ENCODE measurements at regions of chr18 and their contacts with region 1.

Region 1: GRCh38 chr18:33699372-33699771 is 121.4 kb downstream of the ASXL3 start:
- DNase-seq: no peak
- ATAC-seq: no peak
- H3K4me3 ChIP-seq: no peak overlapping the region
- H3K27ac ChIP-seq: no peak overlapping the region
- H3K4me1 ChIP-seq: no peaks in the 10 kb centered on the region
- H3K27me3 ChIP-seq: no peaks in the 10 kb centered on the region
- CTCF ChIP-seq: no peak
- POLR2A ChIP-seq: no peak
- RAD21 ChIP-seq: no peak

Region 2: GRCh38 chr18:32695534-32695933 is 1003.8 kb before region 1 on chr18:
- CTCF ChIA-PET with region 1: no interaction called
- POLR2A ChIA-PET with region 1: no interaction called
- RAD21 ChIA-PET with region 1: no interaction called
- intact Hi-C with region 1: no loop called
- DNase-seq: no peak
- ATAC-seq: no peak
- H3K4me3 ChIP-seq: no peak overlapping the region
- H3K27ac ChIP-seq: no peak overlapping the region
- H3K4me1 ChIP-seq: no peaks in the 10 kb centered on the region
- H3K27me3 ChIP-seq: peaks cover 7% of the 10 kb centered on the region; the same call in 1 of the 2 replicates
- CTCF ChIP-seq: no peak
- POLR2A ChIP-seq: no peak
- RAD21 ChIP-seq: no peak

Region 3: GRCh38 chr18:33483908-33484307 is 215.5 kb before region 1 on chr18:
- CTCF ChIA-PET with region 1: no interaction called
- POLR2A ChIA-PET with region 1: no interaction called
- RAD21 ChIA-PET with region 1: no interaction called
- intact Hi-C with region 1: loop called (anchors 5 kb)
- DNase-seq: no peak
- ATAC-seq: no peak
- H3K4me3 ChIP-seq: no peak overlapping the region
- H3K27ac ChIP-seq: no peak overlapping the region
- H3K4me1 ChIP-seq: no peaks in the 10 kb centered on the region
- H3K27me3 ChIP-seq: no peaks in the 10 kb centered on the region
- CTCF ChIP-seq: no peak
- POLR2A ChIP-seq: no peak
- RAD21 ChIP-seq: no peak

Region 4: DNA sequence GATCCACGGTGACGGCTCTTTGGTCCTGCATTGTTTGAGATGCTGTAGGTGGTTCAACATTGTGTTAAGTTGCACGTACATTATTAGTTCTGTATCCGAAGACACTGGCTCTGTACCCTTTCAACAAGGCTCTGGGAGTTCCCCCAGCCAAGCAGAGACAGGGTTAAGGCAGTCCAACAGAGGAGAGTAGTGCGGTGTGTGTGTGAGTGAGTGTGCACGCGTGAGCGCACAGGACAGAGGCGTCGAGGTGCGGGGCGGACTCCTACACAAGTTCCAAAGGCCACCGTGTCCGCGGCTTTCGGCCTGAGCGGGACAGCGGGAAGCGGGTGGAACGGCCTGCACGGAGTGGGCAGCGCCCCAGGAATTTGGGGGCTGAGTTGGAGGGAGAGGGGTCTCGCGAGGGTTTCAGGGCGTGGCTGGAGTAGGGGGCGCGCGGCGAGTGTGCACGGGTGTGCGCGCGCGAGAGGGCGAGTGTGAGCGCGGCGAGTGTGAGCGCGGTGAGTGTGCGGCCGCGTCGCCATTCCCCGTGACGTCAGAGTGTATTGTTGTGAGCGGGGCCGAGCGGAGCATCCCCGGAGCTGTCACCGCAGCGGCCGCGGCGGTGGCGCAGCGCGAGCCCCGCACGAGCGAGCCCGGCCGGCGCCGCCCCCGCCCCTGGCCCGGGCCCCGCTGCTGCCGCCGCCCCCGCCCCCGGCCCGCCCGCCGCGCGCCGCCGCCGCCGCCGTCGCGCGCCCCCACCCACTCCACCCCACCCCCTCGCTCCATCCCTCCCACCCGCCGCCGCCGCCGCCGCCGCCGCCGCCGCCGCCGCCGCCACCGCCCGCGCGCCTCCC is 121.5 kb before region 1 on chr18 and contains the start of gene ASXL3:
- CTCF ChIA-PET with region 1: no interaction called
- POLR2A ChIA-PET with region 1: no interaction called
- RAD21 ChIA-PET with region 1: no interaction called
- intact Hi-C with region 1: no loop called
- DNase-seq: no peak
- ATAC-seq: no peak
- H3K4me3 ChIP-seq: no peak within 1 kb of the TSS
- H3K27ac ChIP-seq: no peak within 1 kb of the TSS
- H3K4me1 ChIP-seq: no peaks in the 10 kb centered on the region
- H3K27me3 ChIP-seq: no peaks in the 10 kb centered on the region
- CTCF ChIP-seq: no peak
- POLR2A ChIP-seq: no peak
- RAD21 ChIP-seq: no peak
- total RNA-seq, gene ASXL3: not detected

Region 5: DNA sequence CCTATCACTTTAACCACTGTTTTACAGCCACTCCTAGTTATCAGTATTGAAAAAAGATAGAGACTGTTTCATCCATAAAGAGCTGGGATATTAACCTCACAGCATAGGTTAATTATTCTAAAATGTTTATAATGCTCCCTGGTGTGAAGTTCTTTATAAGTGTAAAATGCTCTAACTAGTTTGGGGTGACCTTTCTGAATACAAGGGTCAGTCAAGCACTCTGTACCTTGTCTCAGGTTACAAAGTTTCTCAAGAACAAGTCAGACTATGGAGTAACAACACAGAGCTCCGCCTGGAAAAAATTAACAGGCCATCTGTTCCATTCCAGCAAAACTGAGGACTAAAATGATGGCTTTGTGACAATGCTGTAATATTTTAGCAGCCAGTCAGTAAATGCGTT is 417.9 kb after region 1 on chr18:
- CTCF ChIA-PET with region 1: no interaction called
- POLR2A ChIA-PET with region 1: no interaction called
- RAD21 ChIA-PET with region 1: no interaction called
- intact Hi-C with region 1: no loop called
- DNase-seq: no peak
- ATAC-seq: no peak
- H3K4me3 ChIP-seq: no peak overlapping the region
- H3K27ac ChIP-seq: no peak overlapping the region
- H3K4me1 ChIP-seq: no peaks in the 10 kb centered on the region
- H3K27me3 ChIP-seq: no peaks in the 10 kb centered on the region
- CTCF ChIP-seq: no peak
- POLR2A ChIP-seq: no peak
- RAD21 ChIP-seq: no peak

Measured in HCT116 (cell line).